Vagina (tissue), 2 donors: ENCODE measurements at regions of chr12 and their contacts with region 1.

Region 1: GRCh38 chr12:52404956-52405355 is 1.2 kb downstream of the KRT82 start:
- DNase-seq: no peak
- H3K4me3 ChIP-seq: no peak overlapping the region
- H3K27ac ChIP-seq: no peak overlapping the region
- H3K4me1 ChIP-seq: no peaks in the 10 kb centered on the region
- H3K27me3 ChIP-seq: no peaks in the 10 kb centered on the region
- CTCF ChIP-seq: no peak
- POLR2A ChIP-seq: no peak

Region 2: GRCh38 chr12:52258335-52258901 is 146.5 kb before region 1 on chr12:
- intact Hi-C with region 1: no loop called
- DNase-seq: no peak
- H3K4me3 ChIP-seq: peak overlapping the region in 1 of 2 donors; percentile 30
- H3K27ac ChIP-seq: no peak overlapping the region
- H3K4me1 ChIP-seq: peaks cover 10% of the 10 kb centered on the region
- H3K27me3 ChIP-seq: no peaks in the 10 kb centered on the region
- CTCF ChIP-seq: no peak
- POLR2A ChIP-seq: no peak

Region 3: DNA sequence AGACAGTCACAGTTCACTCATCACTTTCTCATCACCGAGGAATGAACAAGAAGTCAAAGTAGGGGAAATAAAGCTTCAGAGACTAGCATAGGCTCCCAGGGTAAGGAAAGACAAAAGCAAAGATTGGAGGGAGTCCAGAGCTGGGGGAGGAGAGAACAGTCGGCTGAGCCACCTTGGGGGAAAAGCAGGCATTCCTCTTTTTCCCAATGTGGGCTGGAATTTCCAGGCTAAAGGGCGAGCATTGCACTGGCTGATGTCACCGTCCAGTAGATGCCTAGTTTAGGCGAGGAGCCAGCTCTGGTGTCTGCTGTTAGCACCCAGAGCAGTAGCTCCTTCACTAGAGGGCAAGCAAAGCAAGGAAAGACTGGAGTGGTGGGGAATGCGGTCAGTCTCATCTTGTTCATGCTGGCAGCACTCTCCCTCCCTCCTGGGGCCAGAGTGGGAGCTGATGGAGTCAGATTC is 37.7 kb after region 1 on chr12:
- intact Hi-C with region 1: no loop called
- DNase-seq: no peak
- H3K4me3 ChIP-seq: no peak overlapping the region
- H3K27ac ChIP-seq: no peak overlapping the region
- H3K4me1 ChIP-seq: peaks cover 18% of the 10 kb centered on the region
- H3K27me3 ChIP-seq: no peaks in the 10 kb centered on the region
- CTCF ChIP-seq: no peak
- POLR2A ChIP-seq: no peak

Region 4: DNA sequence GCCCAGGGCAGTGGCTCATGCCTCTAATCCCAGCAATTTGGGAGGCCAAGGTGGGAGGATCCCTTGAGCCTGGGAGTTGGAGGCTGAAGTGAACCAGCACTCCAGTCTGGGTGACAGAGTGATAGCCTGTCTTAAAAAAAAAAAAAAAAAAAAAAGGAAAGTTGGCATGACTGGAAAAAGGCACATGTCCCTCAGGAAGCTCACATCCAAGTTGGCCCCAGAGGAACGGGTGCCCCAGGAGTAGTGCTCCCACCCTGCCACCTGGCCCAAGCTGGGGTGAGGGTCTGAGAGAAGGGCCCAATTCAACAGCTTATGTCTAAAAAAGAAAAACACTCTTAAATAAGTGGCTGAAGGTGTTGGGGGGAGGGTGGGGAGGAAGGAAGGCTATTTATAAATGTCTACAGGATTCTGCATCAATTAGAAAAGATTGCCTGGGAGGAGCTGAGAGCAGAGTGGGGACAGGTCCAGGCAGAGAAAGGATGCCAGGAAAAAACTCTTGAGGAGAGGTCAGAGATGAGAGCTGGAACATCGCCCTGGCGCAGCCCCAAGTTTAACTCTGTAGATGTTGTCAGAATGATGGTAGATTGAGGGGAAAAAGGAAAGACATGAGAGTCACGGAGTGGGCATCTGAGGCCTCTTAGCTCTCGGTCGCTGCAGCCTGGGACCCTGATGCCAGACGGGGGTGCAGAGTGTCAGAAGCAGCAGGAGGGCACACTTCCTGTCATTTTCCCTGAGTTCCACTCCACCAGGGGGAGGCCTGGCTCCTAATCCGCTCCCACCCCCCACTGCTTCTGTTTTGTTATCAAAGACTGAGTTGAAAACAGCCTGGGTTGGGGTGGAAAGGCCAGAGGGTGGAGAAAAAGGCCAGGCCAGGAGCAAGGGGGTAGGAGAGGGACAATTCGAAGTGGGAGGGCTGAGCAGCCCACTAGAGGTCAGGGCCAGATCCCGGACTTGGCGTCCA is 666.9 kb after region 1 on chr12:
- intact Hi-C with region 1: loop called (anchors 5 kb)
- DNase-seq: peak in 1 of 2 donors; percentile 90
- H3K4me3 ChIP-seq: no peak overlapping the region
- H3K27ac ChIP-seq: peak overlapping the region; percentile 89
- H3K4me1 ChIP-seq: peaks cover 84% of the 10 kb centered on the region
- H3K27me3 ChIP-seq: no peaks in the 10 kb centered on the region
- CTCF ChIP-seq: no peak
- POLR2A ChIP-seq: no peak